ENCODE measurements at regions of chr9 and their contacts with region 1.

Region 1: DNA sequence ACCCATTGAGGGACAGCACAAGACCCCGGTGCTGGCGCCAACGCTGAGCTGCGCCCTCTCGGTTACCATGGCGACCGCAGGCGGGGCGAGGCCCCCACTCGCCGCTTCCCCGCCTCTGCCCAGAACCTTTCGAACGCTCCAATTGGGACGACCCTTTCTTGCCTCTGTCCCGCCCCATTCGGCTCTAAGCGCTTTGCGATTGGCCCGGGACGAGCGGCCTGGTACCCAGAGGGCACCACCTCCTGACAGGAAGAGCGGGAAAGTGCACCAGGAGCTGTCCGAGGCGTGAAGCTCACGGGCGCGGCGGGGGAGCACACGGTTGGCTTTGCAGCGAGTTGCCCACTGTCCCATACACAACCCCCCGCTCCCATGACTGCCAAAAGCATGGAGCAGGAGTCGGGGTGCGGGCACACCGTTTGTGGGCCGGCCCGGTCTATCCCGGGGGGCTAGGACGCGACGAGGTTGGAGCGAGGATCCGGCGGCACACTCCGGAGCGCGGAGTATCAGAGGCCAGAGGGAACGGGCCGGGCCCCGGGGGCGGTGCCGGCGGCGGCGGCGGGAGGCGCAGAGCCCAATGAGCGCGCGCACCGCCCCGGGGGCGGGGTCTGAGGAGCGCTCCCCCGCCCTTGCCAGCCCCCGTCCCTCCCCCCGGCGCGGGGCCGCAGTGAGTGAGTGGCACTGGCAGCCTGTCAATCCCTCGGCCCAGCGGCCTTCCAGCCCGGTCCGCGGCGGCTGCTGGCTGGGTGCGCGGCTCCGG is 978 bp upstream of the PBX3 start:
- DNase-seq: peak; percentile 95
- ATAC-seq: peak; percentile 81
- H3K4me3 ChIP-seq: peak overlapping the region; percentile 47 to 95 (median 82)
- H3K4me3 Mint-ChIP-seq: peak overlapping the region; percentile 97
- H3K27ac ChIP-seq: peak overlapping the region; percentile 77 to 83
- H3K27ac Mint-ChIP-seq: peak overlapping the region; percentile 97
- H3K4me1 ChIP-seq: peaks cover 16% of the 10 kb centered on the region in 2 donors
- H3K4me1 Mint-ChIP-seq: peaks cover 36% of the 10 kb centered on the region
- H3K27me3 ChIP-seq: no peaks in the 10 kb centered on the region
- H3K27me3 Mint-ChIP-seq: no peaks in the 10 kb centered on the region
- CTCF ChIP-seq: no peak

Region 2: GRCh38 chr9:124940693-124941453 is 805.3 kb before region 1 on chr9 and contains the start of gene GOLGA1:
- CTCF ChIA-PET with region 1: no interaction called
- POLR2A ChIA-PET with region 1: no interaction called
- intact Hi-C with region 1: loop called (anchors 5 kb)
- DNase-seq: peak; percentile 98
- ATAC-seq: peak; percentile 88
- H3K4me3 ChIP-seq: peak within 1 kb of the TSS; percentile 73 to 95 (median 91)
- H3K4me3 Mint-ChIP-seq: peak within 1 kb of the TSS; percentile 85
- H3K27ac ChIP-seq: peak within 1 kb of the TSS; percentile 98
- H3K27ac Mint-ChIP-seq: peak within 1 kb of the TSS; percentile 90
- H3K4me1 ChIP-seq: peaks cover 16 to 17% of the 10 kb centered on the region in 2 donors
- H3K4me1 Mint-ChIP-seq: peaks cover 26% of the 10 kb centered on the region
- H3K27me3 ChIP-seq: no peaks in the 10 kb centered on the region
- H3K27me3 Mint-ChIP-seq: no peaks in the 10 kb centered on the region
- CTCF ChIP-seq: no peak
- total RNA-seq, gene GOLGA1: 24.6 and 26.2 TPM in 2 replicates

Region 3: DNA sequence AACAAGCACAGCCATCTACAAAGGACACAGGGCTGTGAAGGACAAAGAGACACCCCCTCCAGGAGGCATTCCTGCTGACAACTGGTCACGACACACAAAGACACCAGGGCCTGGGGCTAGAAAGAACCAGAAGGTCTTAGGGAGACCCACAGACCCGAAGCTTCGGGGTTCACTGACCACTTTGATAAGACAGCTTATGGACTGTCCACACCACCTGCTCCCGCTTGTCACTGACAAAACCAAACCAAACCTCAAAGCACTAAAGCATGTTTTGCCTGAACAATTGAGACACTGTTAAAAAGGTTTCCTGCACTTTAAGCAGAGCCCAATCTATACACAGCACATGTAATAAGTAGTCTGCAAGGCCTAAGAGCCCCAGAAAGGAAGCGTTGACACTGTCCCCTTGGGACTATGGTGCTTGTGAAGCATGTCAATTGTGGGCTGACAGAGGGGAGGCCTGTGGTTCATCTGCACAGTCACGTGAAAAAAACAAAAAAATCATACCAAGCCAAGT is 299.6 kb before region 1 on chr9:
- CTCF ChIA-PET with region 1: no interaction called
- POLR2A ChIA-PET with region 1: no interaction called
- intact Hi-C with region 1: loop called (anchors 5 kb)
- DNase-seq: peak; percentile 94
- ATAC-seq: peak; percentile 100
- H3K4me3 ChIP-seq: peak overlapping the region in 1 of 5 experiments; percentile 14
- H3K4me3 Mint-ChIP-seq: peak overlapping the region; percentile 71
- H3K27ac ChIP-seq: peak overlapping the region in 1 of 2 donors; percentile 11
- H3K27ac Mint-ChIP-seq: peak overlapping the region; percentile 83
- H3K4me1 ChIP-seq: peaks cover 35 to 43% of the 10 kb centered on the region in 2 donors
- H3K4me1 Mint-ChIP-seq: peaks cover 43% of the 10 kb centered on the region
- H3K27me3 ChIP-seq: no peaks in the 10 kb centered on the region
- H3K27me3 Mint-ChIP-seq: no peaks in the 10 kb centered on the region
- CTCF ChIP-seq: no peak

Region 4: DNA sequence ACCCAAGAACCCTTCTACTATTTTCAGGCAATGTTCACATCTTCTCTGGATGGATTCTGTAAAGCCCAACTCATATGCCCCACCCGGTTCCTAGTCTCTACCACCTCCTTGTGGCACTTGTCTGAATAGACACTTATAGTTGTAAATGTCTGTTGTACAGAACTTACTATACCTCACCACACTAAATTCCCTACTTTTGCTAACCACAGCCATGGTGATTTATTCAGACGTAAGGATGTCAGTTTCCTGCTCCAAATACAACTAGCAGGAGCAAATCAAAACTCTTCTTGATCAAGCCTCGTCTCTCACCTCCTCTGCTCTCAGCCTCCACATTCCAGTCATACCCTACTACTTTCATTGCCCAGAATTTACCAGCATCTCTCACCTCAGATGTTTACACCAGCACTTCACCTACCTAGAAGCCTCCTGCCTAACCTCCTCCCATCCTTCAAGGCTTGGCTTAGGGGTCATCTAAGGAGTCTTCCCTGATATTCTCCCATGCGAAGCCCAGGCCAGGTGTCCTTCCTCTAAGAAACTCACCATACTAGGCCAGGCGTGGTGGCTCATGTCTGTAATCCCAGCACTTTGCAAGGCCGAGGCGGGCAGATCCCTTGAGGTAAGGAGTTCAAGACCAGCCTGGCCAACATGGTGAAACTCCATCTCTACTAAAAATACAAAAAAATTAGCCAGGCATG is 114.7 kb before region 1 on chr9:
- CTCF ChIA-PET with region 1: interaction called, 3 read pairs
- POLR2A ChIA-PET with region 1: no interaction called
- intact Hi-C with region 1: loop called (anchors 5 kb)
- DNase-seq: peak; percentile 58
- ATAC-seq: no peak
- H3K4me3 ChIP-seq: no peak overlapping the region
- H3K4me3 Mint-ChIP-seq: peak overlapping the region; percentile 72
- H3K27ac ChIP-seq: peak overlapping the region in 1 of 2 donors; percentile 26
- H3K27ac Mint-ChIP-seq: peak overlapping the region; percentile 76
- H3K4me1 ChIP-seq: peaks cover 77 to 78% of the 10 kb centered on the region in 2 donors
- H3K4me1 Mint-ChIP-seq: peaks cover 78% of the 10 kb centered on the region
- H3K27me3 ChIP-seq: no peaks in the 10 kb centered on the region
- H3K27me3 Mint-ChIP-seq: no peaks in the 10 kb centered on the region
- CTCF ChIP-seq: peak; percentile 74

Region 5: DNA sequence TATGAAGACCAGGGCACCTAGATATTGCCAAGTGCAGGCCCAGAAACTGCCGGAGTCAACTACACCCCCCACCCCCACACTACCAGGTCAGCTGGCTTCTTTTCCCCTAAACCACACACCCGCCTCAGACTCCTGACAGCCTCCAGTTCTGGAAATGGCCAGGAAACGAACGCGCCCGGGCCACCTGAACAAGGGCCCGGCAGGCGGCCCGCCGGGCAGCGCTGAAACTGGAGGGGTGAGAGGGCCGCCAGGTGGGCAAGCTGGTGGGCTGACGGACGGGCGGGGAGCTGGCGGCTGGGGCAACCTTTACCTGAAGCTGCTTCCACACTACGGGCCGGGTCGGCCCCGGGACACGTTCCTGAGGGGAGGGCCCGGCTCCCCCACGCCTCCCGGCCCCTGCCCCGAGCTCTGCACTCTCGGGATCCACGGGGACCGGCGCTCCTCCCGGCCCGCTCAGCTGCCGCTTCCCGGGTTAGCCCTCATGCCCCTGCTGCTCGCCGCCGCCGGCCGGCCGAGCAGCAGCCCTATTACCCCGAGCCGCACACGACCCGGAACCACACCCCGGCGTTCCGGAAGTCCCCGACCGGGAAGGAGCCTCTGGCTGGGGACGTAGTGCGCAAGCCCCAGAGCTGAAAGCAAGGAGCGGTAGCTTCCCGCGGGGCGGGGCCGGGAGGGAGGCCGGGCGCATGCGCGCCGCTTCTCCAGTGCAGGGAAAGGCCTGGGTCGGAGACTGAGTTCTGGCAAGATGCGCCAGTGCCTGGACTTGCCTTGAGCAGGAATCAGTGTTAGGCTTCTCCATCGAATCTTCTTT is 39.3 kb before region 1 on chr9 and contains the start of gene MAPKAP1:
- CTCF ChIA-PET with region 1: interaction called, 3 read pairs
- POLR2A ChIA-PET with region 1: interaction called, 11 read pairs
- intact Hi-C with region 1: loop called (anchors 1 kb)
- DNase-seq: peak; percentile 92
- ATAC-seq: peak; percentile 99
- H3K4me3 ChIP-seq: peak within 1 kb of the TSS; percentile 73 to 93 (median 81)
- H3K4me3 Mint-ChIP-seq: peak within 1 kb of the TSS; percentile 89
- H3K27ac ChIP-seq: peak within 1 kb of the TSS; percentile 75 to 84
- H3K27ac Mint-ChIP-seq: peak within 1 kb of the TSS; percentile 88
- H3K4me1 ChIP-seq: peaks cover 20 to 22% of the 10 kb centered on the region in 2 donors
- H3K4me1 Mint-ChIP-seq: peaks cover 47% of the 10 kb centered on the region
- H3K27me3 ChIP-seq: peaks cover 0 to 2% (median 0%) of the 10 kb centered on the region in 4 experiments
- H3K27me3 Mint-ChIP-seq: peaks cover 3% of the 10 kb centered on the region
- CTCF ChIP-seq: no peak
- total RNA-seq, gene MAPKAP1: 62.4 and 72.1 TPM in 2 replicates

Region 6: DNA sequence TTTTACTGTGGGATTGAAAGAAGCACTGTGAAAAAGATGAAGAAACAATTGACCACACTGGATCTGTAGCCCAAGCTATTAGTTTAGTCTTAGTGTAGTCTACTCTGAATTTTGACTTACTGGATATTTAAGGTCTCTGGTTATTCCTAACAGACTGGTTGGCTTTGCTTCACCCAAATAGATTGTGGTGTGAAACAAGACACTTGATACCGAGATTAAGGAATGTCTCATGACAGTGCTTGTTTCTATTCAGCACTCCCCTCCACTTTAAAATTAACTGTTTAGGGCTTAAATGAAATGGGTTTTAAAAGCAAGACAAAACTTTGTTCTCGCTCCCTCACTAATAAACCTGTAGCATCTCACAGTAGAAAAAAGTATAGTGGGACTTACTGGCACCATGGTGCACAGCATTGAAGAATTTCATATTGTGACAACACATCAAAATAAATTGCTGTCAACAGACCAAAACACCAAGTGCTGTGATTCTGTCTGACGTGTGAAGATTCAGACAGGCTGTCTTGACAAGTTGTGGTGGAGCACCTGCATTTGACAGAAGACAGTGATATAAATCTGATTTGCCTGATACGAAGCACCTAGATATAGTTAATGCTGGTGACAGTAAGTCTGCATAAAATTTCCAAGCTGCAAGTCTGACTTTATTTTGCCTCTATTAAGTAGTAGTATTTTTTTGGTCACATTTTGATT is 74.1 kb after region 1 on chr9:
- CTCF ChIA-PET with region 1: no interaction called
- POLR2A ChIA-PET with region 1: no interaction called
- intact Hi-C with region 1: loop called (anchors 2 kb)
- DNase-seq: peak; percentile 29
- ATAC-seq: no peak
- H3K4me3 ChIP-seq: peak overlapping the region in 1 of 5 experiments; percentile 57
- H3K4me3 Mint-ChIP-seq: peak overlapping the region; percentile 53
- H3K27ac ChIP-seq: peak overlapping the region in 1 of 2 donors; percentile 73
- H3K27ac Mint-ChIP-seq: peak overlapping the region; percentile 65
- H3K4me1 ChIP-seq: peaks cover 25 to 36% of the 10 kb centered on the region in 2 donors
- H3K4me1 Mint-ChIP-seq: peaks cover 35% of the 10 kb centered on the region
- H3K27me3 ChIP-seq: no peaks in the 10 kb centered on the region
- H3K27me3 Mint-ChIP-seq: no peaks in the 10 kb centered on the region
- CTCF ChIP-seq: no peak

Region 7: GRCh38 chr9:126228781-126229444 is 482.7 kb after region 1 on chr9:
- CTCF ChIA-PET with region 1: no interaction called
- POLR2A ChIA-PET with region 1: no interaction called
- intact Hi-C with region 1: no loop called
- DNase-seq: peak; percentile 79
- ATAC-seq: peak; percentile 98
- H3K4me3 ChIP-seq: no peak overlapping the region
- H3K4me3 Mint-ChIP-seq: no peak overlapping the region
- H3K27ac ChIP-seq: no peak overlapping the region
- H3K27ac Mint-ChIP-seq: no peak overlapping the region
- H3K4me1 ChIP-seq: peaks cover 0 to 3% of the 10 kb centered on the region in 2 donors
- H3K4me1 Mint-ChIP-seq: peaks cover 6% of the 10 kb centered on the region
- H3K27me3 ChIP-seq: peaks cover 0 to 25% (median 0%) of the 10 kb centered on the region in 4 experiments
- H3K27me3 Mint-ChIP-seq: peaks cover 40% of the 10 kb centered on the region
- CTCF ChIP-seq: peak; percentile 89

Region 8: GRCh38 chr9:126722252-126723078 is 976.3 kb after region 1 on chr9:
- CTCF ChIA-PET with region 1: no interaction called
- POLR2A ChIA-PET with region 1: no interaction called
- intact Hi-C with region 1: loop called (anchors 5 kb)
- DNase-seq: peak; percentile 94
- ATAC-seq: peak; percentile 80
- H3K4me3 ChIP-seq: peak overlapping the region; percentile 41 to 95 (median 83)
- H3K4me3 Mint-ChIP-seq: peak overlapping the region; percentile 95
- H3K27ac ChIP-seq: peak overlapping the region; percentile 97 to 98
- H3K27ac Mint-ChIP-seq: peak overlapping the region; percentile 98
- H3K4me1 ChIP-seq: peaks cover 38 to 46% of the 10 kb centered on the region in 2 donors
- H3K4me1 Mint-ChIP-seq: peaks cover 47% of the 10 kb centered on the region
- H3K27me3 ChIP-seq: no peaks in the 10 kb centered on the region
- H3K27me3 Mint-ChIP-seq: no peaks in the 10 kb centered on the region
- CTCF ChIP-seq: no peak

Measured in B cell (primary cell).